Activated T-helper 1 cell treated with anti-CD3 and anti-CD28 coated beads, Interleukin-12 subunit alpha, Interleukin-12 subunit beta, Interleukin-2, Interleukin-4 antibody, amounts not matched to agents 30 ng/mL and 10 ng/mL and 1 ng/mL, durations not matched to agents 14 hours and 24 hours and 36 hours (primary cell): ENCODE measurements at regions of chr12 and their contacts with region 1.

Region 1: GRCh38 chr12:123365025-123365917 is 624 bp upstream of the SBNO1 start:
- DNase-seq: peak; percentile 97
- H3K4me3 Mint-ChIP-seq: peak overlapping the region; percentile 82
- H3K27ac Mint-ChIP-seq: peak overlapping the region; percentile 96
- H3K4me1 Mint-ChIP-seq: peaks cover 19% of the 10 kb centered on the region
- H3K27me3 Mint-ChIP-seq: no peaks in the 10 kb centered on the region

Region 2: DNA sequence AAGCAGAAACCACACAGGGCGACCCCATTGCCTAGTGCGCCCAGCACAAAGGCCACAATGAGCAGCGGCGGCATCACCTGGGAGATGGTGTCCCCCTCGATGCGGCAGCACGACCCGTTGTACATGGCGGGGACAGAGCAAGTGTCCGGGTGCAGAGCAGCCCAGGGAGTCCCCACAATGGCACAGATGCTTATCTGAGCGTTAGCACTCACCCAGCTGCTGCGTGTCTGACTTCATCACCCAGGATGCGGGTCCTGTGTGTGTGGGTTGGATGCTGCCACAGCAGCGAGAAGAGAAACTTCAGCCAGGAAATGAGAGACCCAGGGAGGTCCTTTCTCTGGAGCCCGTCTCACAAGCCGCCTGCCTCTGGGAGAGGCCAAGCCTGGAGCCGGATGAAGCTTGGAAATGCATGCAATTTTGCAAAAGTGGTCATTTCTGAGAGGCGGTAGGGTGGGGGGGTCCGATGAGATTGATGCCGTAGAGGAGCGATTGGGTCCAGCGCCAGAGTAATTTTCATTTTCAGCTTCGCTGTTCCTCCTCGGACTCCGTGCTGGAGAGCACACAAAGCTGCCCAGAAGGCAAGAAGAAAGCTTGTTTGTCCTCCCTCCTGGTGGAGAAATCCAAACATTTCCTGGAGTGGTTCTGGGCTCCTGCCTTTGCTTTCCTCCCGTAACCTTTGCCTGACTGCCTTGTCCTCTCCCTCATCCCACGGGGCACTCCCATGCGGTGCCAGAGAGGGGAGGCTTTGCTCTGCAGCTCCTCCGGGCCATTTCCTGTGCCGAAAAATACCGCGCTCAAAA is 634.9 kb before region 1 on chr12 and contains the start of gene HCAR1:
- intact Hi-C with region 1: no loop called
- DNase-seq: peak; percentile 74
- H3K4me3 Mint-ChIP-seq: peak within 1 kb of the TSS; percentile 91
- H3K27ac Mint-ChIP-seq: peak within 1 kb of the TSS; percentile 90
- H3K4me1 Mint-ChIP-seq: peaks cover 79% of the 10 kb centered on the region
- H3K27me3 Mint-ChIP-seq: no peaks in the 10 kb centered on the region
- total RNA-seq, gene HCAR1: 7.6 and 8.6 TPM in 2 replicates

Region 3: DNA sequence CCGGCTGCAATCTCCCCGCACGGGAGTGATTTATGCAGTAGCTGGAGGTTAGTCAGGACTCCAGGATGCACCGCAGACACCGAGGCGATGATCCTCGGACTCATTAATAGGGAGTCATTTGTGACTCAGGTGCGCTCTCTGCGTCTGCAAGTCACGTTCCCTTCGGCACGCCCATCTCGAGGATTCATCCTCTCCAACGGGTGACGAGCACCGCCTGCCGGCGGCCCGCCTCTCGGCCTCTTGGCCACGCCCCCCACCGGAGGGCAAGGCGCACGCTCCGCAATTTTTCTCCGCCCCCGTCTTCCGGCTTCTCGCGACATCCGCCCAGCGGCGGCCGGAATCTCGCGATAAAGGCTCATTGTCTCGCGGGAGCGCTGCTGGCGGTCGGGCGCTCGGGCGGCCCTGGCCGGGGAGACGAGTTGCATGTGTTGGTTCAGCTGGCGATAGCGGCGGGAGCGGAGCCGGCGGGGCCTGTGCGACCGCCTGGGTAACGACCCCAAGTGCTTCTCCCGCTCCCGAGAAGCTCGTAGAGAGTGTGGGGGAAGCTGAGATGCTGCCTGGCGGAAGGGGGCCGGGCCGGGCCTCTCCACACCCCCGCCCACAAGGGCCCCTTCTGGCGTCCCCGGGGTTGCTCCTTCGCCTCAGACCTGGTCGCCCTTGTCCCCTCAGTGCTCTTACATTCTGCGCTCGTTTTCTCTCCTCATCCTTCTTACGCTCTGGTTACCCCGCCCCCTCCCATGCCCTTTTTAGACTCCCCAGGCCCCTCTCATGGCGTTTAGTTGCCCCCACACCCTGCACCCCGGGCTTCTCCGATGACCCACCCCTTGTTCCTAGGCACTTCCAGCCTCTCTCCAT is 612.6 kb before region 1 on chr12 and contains the start of gene DENR:
- intact Hi-C with region 1: loop called (anchors 5 kb)
- DNase-seq: peak; percentile 100
- H3K4me3 Mint-ChIP-seq: peak within 1 kb of the TSS; percentile 91
- H3K27ac Mint-ChIP-seq: peak within 1 kb of the TSS; percentile 92
- H3K4me1 Mint-ChIP-seq: peaks cover 54% of the 10 kb centered on the region
- H3K27me3 Mint-ChIP-seq: no peaks in the 10 kb centered on the region
- total RNA-seq, gene DENR: 87.6 and 88.7 TPM in 2 replicates

Region 4: DNA sequence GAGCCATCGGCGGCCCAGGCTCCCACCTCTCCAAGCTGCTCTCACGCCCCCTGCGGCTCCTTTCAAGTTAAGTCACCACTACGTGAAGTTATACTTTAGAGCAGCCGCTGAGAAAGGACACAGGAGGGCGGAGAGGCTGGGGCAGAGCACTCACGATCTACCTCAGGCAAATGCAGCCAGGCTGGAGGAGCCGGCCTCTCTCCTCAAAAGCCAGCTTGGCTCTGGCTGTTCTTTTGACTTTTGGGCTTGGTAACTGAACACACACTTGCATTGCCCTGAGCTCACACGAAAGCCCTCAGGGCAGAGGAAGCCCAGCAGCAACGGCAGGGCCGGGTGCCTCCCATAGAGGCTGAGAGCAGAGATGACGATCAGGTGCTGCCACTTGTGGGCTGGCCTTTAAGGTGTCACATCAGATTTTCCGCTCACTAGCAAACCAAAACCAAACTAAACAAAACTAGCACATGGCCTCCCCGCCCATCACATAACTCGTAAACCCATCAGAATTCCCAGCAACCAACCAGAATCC is 289.6 kb before region 1 on chr12:
- intact Hi-C with region 1: loop called (anchors 2 kb)
- DNase-seq: peak; percentile 81
- H3K4me3 Mint-ChIP-seq: peak overlapping the region; percentile 86
- H3K27ac Mint-ChIP-seq: peak overlapping the region; percentile 99
- H3K4me1 Mint-ChIP-seq: peaks cover 57% of the 10 kb centered on the region
- H3K27me3 Mint-ChIP-seq: peaks cover 2% of the 10 kb centered on the region

Region 5: GRCh38 chr12:123278101-123278627 is 87.1 kb before region 1 on chr12:
- intact Hi-C with region 1: loop called (anchors 2 kb)
- DNase-seq: no peak
- H3K4me3 Mint-ChIP-seq: no peak overlapping the region
- H3K27ac Mint-ChIP-seq: peak overlapping the region; percentile 84
- H3K4me1 Mint-ChIP-seq: peaks cover 7% of the 10 kb centered on the region
- H3K27me3 Mint-ChIP-seq: peaks cover 3% of the 10 kb centered on the region

Region 6: GRCh38 chr12:123457980-123458783 is 92.9 kb after region 1 on chr12 and contains the start of gene SNRNP35:
- intact Hi-C with region 1: loop called (anchors 1 kb)
- DNase-seq: peak; percentile 79
- H3K4me3 Mint-ChIP-seq: peak within 1 kb of the TSS; percentile 95
- H3K27ac Mint-ChIP-seq: peak within 1 kb of the TSS; percentile 99
- H3K4me1 Mint-ChIP-seq: peaks cover 17% of the 10 kb centered on the region
- H3K27me3 Mint-ChIP-seq: no peaks in the 10 kb centered on the region
- total RNA-seq, gene SNRNP35: 31.5 and 34.5 TPM in 2 replicates

Region 7: DNA sequence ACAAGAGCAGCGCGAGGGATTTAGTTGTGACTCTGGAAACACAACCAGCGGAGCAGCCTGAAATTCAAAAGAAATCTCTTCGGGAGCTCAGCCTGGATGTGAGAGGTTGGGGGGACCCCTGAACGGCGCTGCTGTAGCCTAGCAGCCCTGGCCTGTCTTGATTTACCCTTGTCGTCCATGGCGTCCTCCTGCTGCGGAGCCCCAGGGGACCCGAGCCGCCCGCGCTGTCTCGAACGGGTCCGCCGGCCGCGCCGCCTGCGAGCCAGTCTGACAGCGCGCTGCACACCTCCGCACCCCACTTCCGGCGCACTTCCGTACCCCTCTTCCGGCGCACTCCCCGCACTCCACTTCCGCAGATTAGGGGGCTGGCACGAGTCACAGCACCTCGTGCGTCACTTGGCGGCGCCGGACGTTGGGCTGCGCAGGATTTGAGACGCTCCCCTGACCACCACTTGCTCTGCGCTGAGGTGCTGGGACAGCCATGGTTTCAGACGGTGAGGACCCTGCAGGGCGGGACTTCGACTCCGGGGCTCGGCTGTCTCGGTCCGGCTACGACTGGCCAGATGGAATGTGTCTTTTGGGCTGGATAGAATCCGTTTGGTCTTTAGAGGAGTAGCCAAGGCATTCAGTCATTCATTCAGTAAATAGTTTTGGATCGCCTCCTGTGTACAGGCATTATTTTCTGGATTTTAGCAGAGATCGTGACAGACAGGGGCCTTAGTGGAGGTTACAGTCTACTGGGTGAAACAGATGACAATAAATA is 268.3 kb after region 1 on chr12 and contains the starts of genes EIF2B1 and GTF2H3:
- intact Hi-C with region 1: loop called (anchors 2 kb)
- DNase-seq: peak; percentile 96
- H3K4me3 Mint-ChIP-seq: peak within 1 kb of the TSS; percentile 98
- H3K27ac Mint-ChIP-seq: peak within 1 kb of the TSS; percentile 97
- H3K4me1 Mint-ChIP-seq: peaks cover 35% of the 10 kb centered on the region
- H3K27me3 Mint-ChIP-seq: no peaks in the 10 kb centered on the region
- total RNA-seq, gene EIF2B1: 74.8 and 76.5 TPM in 2 replicates
- total RNA-seq, gene GTF2H3: 65.8 and 66.1 TPM in 2 replicates